HepG2 (cell line): ENCODE measurements at regions of chr17 and their contacts with region 1.

Region 1: GRCh38 chr17:36148559-36149295 is 27.7 kb downstream of the TBC1D3B start:
- DNase-seq: peak; percentile 28
- ATAC-seq: peak; percentile 90
- H3K4me3 ChIP-seq: no peak overlapping the region
- H3K27ac ChIP-seq: no peak overlapping the region
- H3K4me1 ChIP-seq: 0 out of 2 replicates have a peak, but pooled peaks cover 8% of the 10 kb centered on the region
- H3K27me3 ChIP-seq: no peaks in the 10 kb centered on the region; a peak in 2 of 5 replicates
- CTCF ChIP-seq: peak; percentile 93
- EP300 ChIP-seq: no peak
- POLR2A ChIP-seq: no peak
- RAD21 ChIP-seq: peak; percentile 86

Region 2: GRCh38 chr17:35947156-35947585 is 201.6 kb before region 1 on chr17:
- CTCF ChIA-PET with region 1: interaction called, 26 read pairs
- POLR2A ChIA-PET with region 1: no interaction called
- in situ Hi-C with region 1: no loop called
- intact Hi-C with region 1: loop called (anchors 1 kb)
- DNase-seq: peak; percentile 52
- ATAC-seq: peak; percentile 91
- H3K4me3 ChIP-seq: peak overlapping the region in 1 of 3 experiments; percentile 32; a peak in 1 of 6 replicates
- H3K27ac ChIP-seq: no peak overlapping the region
- H3K4me1 ChIP-seq: 0 out of 2 replicates have a peak, but pooled peaks cover 5% of the 10 kb centered on the region
- H3K27me3 ChIP-seq: peaks cover 0 to 6% of the 10 kb centered on the region in 2 experiments; a peak in 1 of 5 replicates
- CTCF ChIP-seq: peak; percentile 90
- EP300 ChIP-seq: no peak
- POLR2A ChIP-seq: no peak
- RAD21 ChIP-seq: peak; percentile 73

Region 3: DNA sequence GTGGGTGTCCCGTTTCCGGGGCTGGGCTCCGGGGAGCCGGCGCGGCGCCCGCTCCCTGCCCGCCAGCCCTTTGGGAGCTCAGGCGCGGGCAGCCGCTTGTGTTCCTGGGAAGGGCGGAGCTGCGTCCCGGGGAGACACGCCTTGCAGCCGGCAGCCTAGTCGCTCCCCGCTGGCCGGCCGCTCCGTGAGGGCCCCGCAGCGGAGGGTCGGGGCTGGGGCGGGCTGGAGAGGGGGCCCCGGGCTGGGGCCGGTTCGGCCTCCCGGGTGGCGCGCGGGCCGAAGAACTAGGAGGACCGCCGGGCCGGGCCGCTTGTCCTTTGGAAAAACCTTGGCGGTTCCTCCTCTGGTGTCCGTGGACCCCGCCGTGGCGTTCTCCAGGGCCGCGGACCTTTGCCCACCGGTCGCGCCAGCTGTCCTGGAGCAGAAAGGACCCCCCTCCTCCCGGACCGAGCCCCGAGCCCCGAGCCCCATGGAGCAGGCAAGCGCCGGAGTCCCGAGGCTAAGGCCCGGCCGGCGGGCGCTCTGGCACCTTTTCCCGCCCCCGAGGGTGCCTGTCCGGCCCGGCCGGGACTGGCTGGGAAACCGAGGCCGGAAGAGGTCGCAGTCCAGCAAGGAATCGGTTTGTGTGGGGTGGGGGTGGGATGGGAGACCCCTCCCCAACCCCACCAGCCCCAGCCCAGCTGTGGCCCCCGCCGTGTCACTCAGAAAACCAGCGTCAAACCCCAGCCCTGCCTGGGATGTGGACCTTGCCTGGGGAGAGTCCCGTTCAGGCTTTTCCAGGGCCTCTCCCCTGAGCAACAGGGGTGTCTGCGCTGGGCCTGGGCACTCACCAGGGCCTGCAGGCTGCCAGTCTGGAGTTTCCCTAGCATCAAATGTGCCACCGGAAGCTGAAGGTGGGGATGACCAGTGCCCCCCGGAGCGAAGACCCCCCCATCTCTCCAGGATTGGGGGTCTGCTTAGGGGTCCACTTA is 34.6 kb after region 1 on chr17:
- CTCF ChIA-PET with region 1: no interaction called
- POLR2A ChIA-PET with region 1: no interaction called
- in situ Hi-C with region 1: no loop called
- intact Hi-C with region 1: no loop called
- DNase-seq: peak; percentile 37
- ATAC-seq: peak; percentile 91
- H3K4me3 ChIP-seq: peak overlapping the region; percentile 53 to 68 (median 54); a peak in 4 of 6 replicates
- H3K27ac ChIP-seq: no peak overlapping the region
- H3K4me1 ChIP-seq: 0 out of 2 replicates have a peak, but pooled peaks cover under 1% of the 10 kb centered on the region
- H3K27me3 ChIP-seq: peaks cover 22 to 48% of the 10 kb centered on the region in 2 experiments
- CTCF ChIP-seq: no peak
- EP300 ChIP-seq: no peak
- POLR2A ChIP-seq: no peak
- RAD21 ChIP-seq: no peak